ENCODE measurements at regions of chr7 and their contacts with region 1.

Region 1: DNA sequence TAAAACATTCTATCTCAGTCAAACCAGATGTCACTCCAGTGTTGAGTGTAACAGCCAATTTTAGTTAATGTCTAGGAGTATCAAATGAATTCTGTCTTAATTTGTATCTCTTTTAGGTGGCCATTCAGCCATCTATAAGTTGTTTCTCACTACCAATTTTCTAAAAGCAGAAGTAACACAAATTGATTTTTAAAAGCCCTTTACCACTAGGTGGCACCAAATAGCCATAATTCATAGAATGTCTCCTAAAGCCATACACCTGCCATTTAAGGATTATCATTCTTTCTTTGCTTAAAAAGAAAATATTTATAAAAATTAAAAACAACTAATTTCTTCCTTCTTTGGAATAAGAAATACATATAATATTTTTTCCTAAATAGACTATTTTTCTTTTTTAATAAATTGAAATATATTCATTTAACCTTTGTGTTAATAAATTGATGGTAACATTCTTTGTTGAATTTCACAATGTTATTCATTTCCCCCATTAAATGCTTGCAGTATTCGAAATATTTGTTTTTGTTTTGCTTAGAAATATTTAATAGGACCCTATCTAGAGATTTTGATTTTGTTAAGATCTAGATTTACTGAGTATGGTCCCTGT is 107.8 kb upstream of the PPP1R3A start:
- DNase-seq: no peak
- H3K4me3 Mint-ChIP-seq: no peak overlapping the region
- H3K27ac Mint-ChIP-seq: no peak overlapping the region
- H3K4me1 Mint-ChIP-seq: no peaks in the 10 kb centered on the region
- H3K27me3 Mint-ChIP-seq: peaks cover 5% of the 10 kb centered on the region

Region 2: DNA sequence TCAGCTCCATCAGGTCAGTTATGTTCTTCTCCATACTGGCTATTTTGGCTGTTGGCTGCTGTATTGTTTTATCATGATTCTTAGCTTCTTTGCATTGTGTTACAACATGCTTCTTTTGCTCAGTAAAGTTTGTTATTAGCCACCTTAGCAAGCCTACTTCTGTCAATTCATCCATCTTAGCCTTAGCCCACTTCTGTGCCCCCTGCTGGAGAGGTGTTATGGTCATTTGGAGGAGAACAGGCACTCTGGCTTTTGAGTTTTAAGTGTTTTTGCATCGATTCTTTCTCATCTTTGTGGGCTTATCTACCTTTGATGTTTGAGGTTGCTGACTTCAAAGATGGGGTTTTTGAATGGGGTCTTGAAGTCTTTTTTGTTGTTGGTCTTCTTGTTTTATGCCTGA is 183.4 kb after region 1 on chr7:
- CTCF ChIA-PET with region 1: no interaction called
- POLR2A ChIA-PET with region 1: no interaction called
- intact Hi-C with region 1: no loop called
- DNase-seq: no peak
- H3K4me3 Mint-ChIP-seq: no peak overlapping the region
- H3K27ac Mint-ChIP-seq: no peak overlapping the region
- H3K4me1 Mint-ChIP-seq: no peaks in the 10 kb centered on the region
- H3K27me3 Mint-ChIP-seq: peaks cover 2% of the 10 kb centered on the region

Region 3: DNA sequence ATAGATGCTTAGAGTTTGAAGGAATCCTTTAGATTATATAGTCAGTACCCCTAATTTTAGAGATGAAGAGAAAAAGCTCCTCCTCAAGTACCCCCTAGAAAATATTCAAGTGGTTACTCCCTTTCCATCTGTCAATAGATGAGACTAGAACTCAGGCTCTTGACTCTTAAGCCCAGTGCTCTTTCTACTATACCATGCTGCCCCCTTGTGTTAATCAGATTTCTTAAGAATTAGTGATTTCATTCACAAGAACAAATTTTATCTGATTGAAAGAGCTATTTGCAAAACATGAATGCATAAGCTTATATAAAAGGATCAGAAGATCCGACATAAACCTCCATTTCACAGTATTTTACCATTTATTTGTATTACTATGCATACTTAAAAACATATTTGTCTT is 1824.7 kb after region 1 on chr7:
- CTCF ChIA-PET with region 1: interaction called, 9 read pairs
- POLR2A ChIA-PET with region 1: no interaction called
- intact Hi-C with region 1: loop called (anchors 5 kb)
- DNase-seq: no peak
- H3K4me3 Mint-ChIP-seq: no peak overlapping the region
- H3K27ac Mint-ChIP-seq: no peak overlapping the region
- H3K4me1 Mint-ChIP-seq: no peaks in the 10 kb centered on the region
- H3K27me3 Mint-ChIP-seq: peaks cover 6% of the 10 kb centered on the region

Region 4: DNA sequence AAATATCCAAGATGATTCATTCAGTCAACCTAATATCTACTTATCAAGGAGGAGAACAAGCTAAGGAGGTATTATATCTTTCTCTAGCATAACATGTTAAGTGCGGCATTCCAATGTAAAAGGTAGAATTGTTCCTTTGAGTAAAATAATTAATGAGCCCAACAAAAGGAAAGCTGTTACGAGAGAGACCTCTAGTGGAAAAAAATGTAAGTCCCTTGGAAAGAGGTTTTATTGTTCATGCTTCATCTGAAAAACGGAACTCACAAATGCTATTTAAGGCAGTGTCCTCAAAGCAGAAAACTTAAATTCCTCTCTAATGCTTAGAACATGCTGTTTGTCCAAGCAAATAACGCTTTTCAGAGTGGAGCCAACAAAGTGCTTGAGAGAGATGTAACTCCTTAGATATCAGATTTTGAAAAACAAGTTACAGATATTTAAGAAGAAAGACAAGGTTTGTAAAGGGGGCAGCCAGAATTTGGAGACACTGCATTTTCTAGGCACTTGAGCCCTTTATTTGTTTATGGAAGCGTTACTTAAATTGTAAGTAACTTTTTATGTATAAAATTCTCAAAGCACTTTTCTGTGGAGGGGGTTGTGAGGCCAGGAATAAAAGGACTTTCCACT is 1884.1 kb after region 1 on chr7:
- CTCF ChIA-PET with region 1: interaction called, 3 read pairs
- POLR2A ChIA-PET with region 1: no interaction called
- intact Hi-C with region 1: loop called (anchors 2 kb)
- DNase-seq: no peak
- H3K4me3 Mint-ChIP-seq: no peak overlapping the region
- H3K27ac Mint-ChIP-seq: no peak overlapping the region
- H3K4me1 Mint-ChIP-seq: no peaks in the 10 kb centered on the region
- H3K27me3 Mint-ChIP-seq: peaks cover 7% of the 10 kb centered on the region

Measured in activated CD4-positive, alpha-beta memory T cell treated with anti-CD3 and anti-CD28 coated beads for 36 hours (primary cell).